ENCODE measurements at regions of chr4 and their contacts with region 1.

Region 1: DNA sequence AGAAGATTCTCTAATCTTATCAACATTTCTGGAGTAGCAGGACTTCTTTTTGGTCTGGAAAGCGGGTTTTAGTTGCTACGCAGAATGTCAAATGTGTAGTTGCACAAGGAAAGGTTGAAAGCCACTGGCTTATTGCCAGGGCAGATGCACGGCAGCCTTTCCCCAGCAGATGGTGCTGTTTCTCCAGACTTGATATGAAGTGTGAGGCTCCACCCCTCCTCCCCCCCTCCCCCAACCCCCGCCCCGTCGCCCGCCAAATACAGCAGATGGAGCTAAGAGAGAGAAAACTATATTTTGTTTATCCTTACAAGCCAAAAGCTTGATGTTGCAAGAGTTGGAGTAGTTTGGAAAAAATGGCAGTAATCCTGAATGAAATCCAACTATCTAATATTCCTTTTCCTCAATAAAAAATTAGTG is 32.0 kb downstream of the ENOPH1 start:
- DNase-seq: peak; percentile 39
- H3K4me3 ChIP-seq: no peak overlapping the region
- H3K27ac ChIP-seq: peak overlapping the region in 1 of 4 donors; percentile 42
- H3K4me1 ChIP-seq: peaks cover 0 to 14% (median 0%) of the 10 kb centered on the region in 3 donors
- H3K27me3 ChIP-seq: no peaks in the 10 kb centered on the region
- CTCF ChIP-seq: peak; percentile 65 to 88 (median 74)
- POLR2A ChIP-seq: no peak

Region 2: GRCh38 chr4:81698538-81699296 is 763.7 kb before region 1 on chr4:
- intact Hi-C with region 1: no loop called
- DNase-seq: no peak
- H3K4me3 ChIP-seq: no peak overlapping the region
- H3K27ac ChIP-seq: no peak overlapping the region
- H3K4me1 ChIP-seq: no peaks in the 10 kb centered on the region
- H3K27me3 ChIP-seq: no peaks in the 10 kb centered on the region
- CTCF ChIP-seq: no peak
- POLR2A ChIP-seq: no peak

Region 3: GRCh38 chr4:82084747-82085146 is 377.7 kb before region 1 on chr4:
- intact Hi-C with region 1: no loop called
- DNase-seq: no peak
- H3K4me3 ChIP-seq: no peak overlapping the region
- H3K27ac ChIP-seq: no peak overlapping the region
- H3K4me1 ChIP-seq: no peaks in the 10 kb centered on the region
- H3K27me3 ChIP-seq: no peaks in the 10 kb centered on the region
- CTCF ChIP-seq: no peak
- POLR2A ChIP-seq: no peak

Region 4: GRCh38 chr4:82515705-82516104 is 53.3 kb after region 1 on chr4:
- intact Hi-C with region 1: no loop called
- DNase-seq: no peak
- H3K4me3 ChIP-seq: no peak overlapping the region
- H3K27ac ChIP-seq: no peak overlapping the region
- H3K4me1 ChIP-seq: peaks cover 0 to 32% (median 0%) of the 10 kb centered on the region in 3 donors
- H3K27me3 ChIP-seq: no peaks in the 10 kb centered on the region
- CTCF ChIP-seq: no peak
- POLR2A ChIP-seq: no peak

Region 5: DNA sequence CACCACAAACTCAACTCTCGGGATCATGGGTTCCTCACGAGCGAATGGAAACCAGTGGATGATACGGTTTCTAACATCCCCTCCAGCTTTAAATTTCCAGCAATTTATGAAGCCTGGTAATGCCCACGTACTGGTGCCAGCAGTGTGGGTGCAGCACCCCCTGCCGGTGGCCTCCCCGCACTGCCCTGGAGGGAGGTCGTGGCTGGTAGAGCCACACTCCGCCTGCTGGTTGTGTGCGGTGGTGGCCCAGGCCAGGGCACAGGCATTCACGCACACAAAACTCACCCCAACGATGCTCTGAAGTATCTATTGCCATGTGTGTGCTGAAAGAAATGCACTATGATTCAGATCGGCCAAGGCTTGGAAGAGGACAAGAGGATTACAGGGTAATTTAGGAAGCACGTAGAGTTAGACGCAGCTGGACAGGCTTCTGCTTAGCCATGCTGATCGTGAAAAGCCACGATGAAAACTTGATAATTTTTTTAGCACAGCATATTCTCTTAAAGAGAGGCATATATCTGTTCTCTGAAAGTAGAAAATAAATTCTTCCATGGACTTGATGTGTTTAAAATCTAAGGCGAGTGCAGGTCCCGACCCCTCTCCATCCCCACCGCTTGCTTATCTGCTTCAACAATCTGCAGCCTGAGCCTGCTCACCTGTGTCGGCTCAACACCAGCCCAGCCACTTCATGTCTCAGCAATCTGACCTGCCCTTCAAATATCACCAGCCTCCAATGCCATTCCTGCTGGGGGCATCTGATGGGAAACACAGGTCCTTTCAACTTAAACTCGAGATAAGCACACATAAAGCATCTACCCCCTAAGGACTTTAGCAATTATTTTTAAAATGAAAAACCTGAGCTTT is 277.1 kb after region 1 on chr4:
- intact Hi-C with region 1: loop called (anchors 10 kb)
- DNase-seq: no peak
- H3K4me3 ChIP-seq: no peak overlapping the region
- H3K27ac ChIP-seq: no peak overlapping the region
- H3K4me1 ChIP-seq: no peaks in the 10 kb centered on the region
- H3K27me3 ChIP-seq: no peaks in the 10 kb centered on the region
- CTCF ChIP-seq: peak; percentile 69 to 98 (median 93)
- POLR2A ChIP-seq: no peak

Region 6: DNA sequence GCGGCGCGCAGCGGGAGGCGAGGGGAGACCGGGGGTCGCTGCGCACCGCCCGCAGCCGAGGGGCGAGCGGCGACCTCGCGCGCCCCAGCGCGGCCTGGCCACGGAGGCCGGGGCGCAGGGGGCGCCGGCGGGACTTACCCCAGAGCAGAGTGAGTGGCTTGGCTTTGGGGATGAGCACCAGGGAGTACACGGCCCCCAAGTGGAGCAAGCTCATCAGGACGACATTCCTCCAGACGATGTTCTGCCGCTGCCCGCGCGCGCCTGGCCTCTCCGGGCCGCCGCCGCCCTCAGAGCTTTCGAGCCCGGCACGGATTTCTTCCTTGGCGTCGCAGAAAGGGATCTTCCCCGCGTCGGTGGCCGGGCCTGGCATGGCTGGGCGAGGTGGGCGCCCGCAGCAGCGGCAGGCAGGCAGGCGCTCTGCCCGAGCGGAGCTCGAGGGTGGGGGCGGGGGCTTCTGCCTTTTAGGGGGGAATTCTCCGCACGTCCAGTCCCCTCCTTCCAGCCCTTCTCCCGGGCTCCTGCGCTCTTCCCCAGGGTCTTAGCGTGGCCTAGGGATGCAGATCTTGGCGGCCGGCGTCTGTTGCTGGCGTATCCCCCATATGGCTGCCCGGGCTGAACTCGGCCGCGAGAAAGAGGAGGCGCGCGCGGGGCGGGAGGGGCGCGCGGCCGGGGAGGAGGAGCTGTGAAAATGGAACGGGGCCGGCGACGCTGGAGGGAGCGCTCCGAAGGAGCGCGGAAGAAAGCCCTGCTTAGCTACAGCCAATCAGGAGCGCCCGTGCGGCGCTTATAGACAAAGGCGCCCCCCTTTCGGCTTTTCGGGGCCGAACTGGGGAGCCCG is 336.0 kb after region 1 on chr4 and contains the start of gene SCD5:
- intact Hi-C with region 1: loop called (anchors 10 kb)
- DNase-seq: no peak
- H3K4me3 ChIP-seq: peak within 1 kb of the TSS; percentile 41 to 89 (median 76)
- H3K27ac ChIP-seq: peak within 1 kb of the TSS; percentile 17 to 79 (median 66)
- H3K4me1 ChIP-seq: peaks cover 10 to 37% (median 19%) of the 10 kb centered on the region in 3 donors
- H3K27me3 ChIP-seq: peaks cover 0 to 17% (median 1%) of the 10 kb centered on the region in 4 donors
- CTCF ChIP-seq: no peak
- POLR2A ChIP-seq: no peak
- total RNA-seq, gene SCD5: 1.2 to 6.3 (median 4.3) TPM